ENCODE measurements at regions of chr17 and their contacts with region 1.

Region 1: GRCh38 chr17:47323382-47324222 is at the start of gene EFCAB13:
- DNase-seq: peak; percentile 83 to 96
- ATAC-seq: peak; percentile 95 to 97
- H3K4me3 ChIP-seq: peak within 1 kb of the TSS; percentile 80
- H3K27ac ChIP-seq: peak within 1 kb of the TSS; percentile 91 to 97
- H3K4me1 ChIP-seq: peaks cover 10% of the 10 kb centered on the region; the same call in 2 of the 3 replicates
- CTCF ChIP-seq: peak; percentile 35; the same call in 1 of the 3 replicates
- EP300 ChIP-seq: no peak
- POLR2A ChIP-seq: peak; percentile 86
- RAD21 ChIP-seq: no peak; a peak in 2 of 5 replicates
- polyA plus RNA-seq, gene EFCAB13: 4.1 and 6.0 TPM in 2 replicates

Region 2: DNA sequence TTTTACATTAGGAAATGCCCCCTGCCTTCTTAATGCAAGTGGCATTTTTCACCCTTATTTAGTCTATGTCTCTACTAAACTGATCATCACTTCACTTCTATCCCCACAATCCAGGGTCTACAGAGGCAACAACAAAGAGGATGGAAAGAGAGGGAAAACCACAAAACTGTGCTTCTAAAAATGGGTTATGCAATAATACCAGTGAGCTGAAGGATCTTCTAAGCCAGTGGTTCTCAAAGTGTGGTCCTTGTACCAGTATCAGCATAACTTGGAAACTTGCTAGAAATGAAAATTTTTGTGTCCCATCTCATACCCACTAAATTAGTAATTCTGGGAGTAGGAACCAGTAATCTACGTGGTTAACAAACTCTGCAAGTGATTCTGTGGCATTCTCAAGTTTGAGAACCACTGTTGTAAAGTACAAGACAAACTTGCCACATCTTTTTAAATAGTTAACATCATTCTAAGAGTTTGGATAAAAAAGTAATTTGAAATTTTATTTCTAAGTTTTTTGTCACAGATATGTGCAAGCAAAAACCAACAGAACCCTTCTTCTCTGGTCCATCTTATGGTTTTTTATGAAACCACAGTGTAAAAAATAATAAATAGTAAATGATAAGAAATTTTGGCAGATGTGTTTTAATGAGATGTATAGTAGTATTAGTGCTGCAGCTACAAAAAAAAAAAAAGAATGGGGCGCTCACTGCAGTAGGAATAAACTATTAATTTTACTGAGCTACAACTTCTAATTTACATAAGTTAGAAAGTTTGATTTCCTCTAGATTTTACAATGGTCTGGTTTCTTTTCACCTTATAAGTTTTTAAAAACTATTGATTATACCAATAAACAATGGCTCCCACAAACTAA is 150.7 kb before region 1 on chr17:
- CTCF ChIA-PET with region 1: no interaction called
- POLR2A ChIA-PET with region 1: no interaction called
- DNase-seq: no peak
- ATAC-seq: no peak
- H3K4me3 ChIP-seq: no peak overlapping the region
- H3K27ac ChIP-seq: no peak overlapping the region
- H3K4me1 ChIP-seq: no peaks in the 10 kb centered on the region
- CTCF ChIP-seq: no peak
- EP300 ChIP-seq: no peak
- POLR2A ChIP-seq: no peak
- RAD21 ChIP-seq: no peak

Region 3: DNA sequence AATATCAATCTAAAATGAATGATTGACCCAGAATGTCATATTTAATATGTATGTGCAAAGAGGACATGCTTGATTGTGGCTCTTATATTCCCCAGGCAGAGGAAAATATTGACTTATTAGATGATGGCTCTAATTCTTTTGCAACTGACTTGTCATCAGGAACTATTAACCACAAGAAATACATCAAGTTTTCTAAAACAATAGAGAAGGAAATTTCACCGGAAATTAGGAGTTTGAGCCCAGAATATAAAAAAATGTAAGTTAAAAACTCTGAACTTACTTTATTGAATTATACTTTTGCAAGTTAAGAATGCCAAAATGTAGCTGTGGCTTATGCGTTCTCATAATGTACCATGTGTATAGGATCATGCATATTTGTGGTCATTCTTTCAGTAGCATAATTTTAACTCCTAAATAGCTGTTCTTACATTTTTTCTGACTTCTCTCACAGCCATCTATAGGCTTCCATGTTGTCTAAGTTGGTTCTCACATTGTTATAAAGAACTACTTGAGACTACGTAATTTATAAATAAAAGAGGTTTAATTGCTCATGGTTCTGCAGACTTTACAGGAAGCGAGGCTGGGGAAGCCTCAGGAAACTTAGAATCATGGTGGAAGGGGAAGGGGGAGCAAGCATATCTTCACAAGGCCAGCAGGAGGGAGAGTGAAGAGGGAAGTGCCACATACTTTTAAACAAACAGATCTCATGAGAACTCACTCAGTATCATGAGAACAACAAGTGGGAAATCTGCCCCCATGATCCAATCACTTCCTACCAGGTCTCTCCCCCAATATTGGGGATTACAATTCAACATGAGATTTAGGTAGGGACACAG is 11.7 kb after region 1 on chr17:
- CTCF ChIA-PET with region 1: interaction called, 10 read pairs
- POLR2A ChIA-PET with region 1: interaction called, 5 read pairs
- DNase-seq: no peak
- ATAC-seq: no peak
- H3K4me3 ChIP-seq: no peak overlapping the region
- H3K27ac ChIP-seq: no peak overlapping the region
- H3K4me1 ChIP-seq: no peaks in the 10 kb centered on the region
- CTCF ChIP-seq: no peak
- EP300 ChIP-seq: no peak
- POLR2A ChIP-seq: no peak
- RAD21 ChIP-seq: no peak

Measured in A549 (cell line).